ENCODE measurements at regions of chr2 and their contacts with region 1.

Region 1: DNA sequence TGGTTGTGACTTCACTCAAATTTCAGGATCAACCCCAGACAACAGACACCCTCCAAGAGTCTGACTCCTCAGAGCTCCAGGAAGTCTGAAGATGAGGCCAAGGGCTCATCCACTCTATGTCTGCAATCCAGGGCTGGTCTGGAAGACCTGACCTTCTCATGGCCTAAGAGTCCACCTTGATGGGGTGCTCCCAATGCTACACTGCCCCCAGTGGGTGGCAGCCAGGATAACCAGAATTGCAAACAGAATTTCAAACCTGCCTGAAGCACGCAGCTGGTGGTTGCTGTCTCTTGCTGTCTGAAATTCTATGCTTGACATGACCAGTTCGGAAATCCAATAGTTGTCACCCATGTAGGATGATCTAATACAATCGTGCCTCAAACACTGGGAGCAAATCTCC is 96.0 kb downstream of the UXS1 start:
- DNase-seq: no peak
- ATAC-seq: no peak
- H3K4me3 ChIP-seq: no peak overlapping the region
- H3K4me3 Mint-ChIP-seq: peak overlapping the region in 4 of 10 donors; percentile 1 to 36 (median 6)
- H3K27ac ChIP-seq: peak overlapping the region; percentile 80
- H3K27ac Mint-ChIP-seq: peak overlapping the region; percentile 25 to 97 (median 94)
- H3K4me1 ChIP-seq: peaks cover 41 to 47% of the 10 kb centered on the region in 2 donors
- H3K4me1 Mint-ChIP-seq: peaks cover 27 to 67% (median 55%) of the 10 kb centered on the region in 7 donors
- H3K27me3 ChIP-seq: no peaks in the 10 kb centered on the region
- H3K27me3 Mint-ChIP-seq: no peaks in the 10 kb centered on the region

Region 2: DNA sequence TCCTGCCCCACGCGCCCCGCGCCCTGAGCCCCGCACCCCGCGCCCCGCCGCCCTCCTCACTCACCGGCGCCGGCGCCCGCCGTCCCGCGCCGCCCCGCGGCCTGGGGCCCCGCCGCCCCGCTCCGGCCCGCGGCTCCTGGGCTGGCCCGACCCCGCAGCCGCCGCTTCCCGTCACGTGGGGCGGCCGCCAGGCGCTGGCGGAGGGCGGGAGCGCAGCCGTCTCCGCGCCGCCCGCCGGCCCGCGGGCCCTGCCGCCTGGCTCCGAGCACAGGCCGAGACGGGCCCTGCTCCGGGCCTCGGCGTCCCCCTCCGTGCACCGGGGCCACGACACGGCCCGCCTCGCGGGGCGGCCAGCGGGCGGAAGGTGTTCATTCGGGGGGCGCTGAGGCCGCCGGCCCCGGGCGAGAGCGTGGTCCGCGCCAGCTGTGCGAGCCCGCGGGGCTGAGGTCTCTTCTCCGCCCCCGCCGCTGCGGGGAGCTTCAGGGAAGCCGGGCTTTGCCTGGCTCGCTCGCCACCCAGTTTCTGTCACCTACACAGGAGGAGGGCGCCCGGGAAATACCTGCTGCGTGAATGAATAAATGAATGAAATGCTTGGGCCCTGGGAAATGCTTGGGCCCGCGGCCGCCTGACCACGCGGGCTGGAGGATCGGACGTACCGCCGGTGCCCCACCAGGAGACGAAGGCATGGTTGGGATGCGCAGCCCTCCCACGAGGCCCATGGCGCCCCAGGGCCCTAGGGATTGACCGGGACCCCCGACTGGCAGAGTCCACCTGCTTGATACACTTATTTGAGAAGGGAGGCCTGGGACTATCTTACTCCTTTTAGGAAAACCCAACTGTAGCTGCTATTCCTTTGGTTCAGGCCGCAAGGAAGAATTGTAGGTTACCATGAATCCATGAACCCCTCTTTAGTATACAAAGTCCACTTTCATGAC is 768.3 kb before region 1 on chr2 and contains the start of gene TGFBRAP1:
- CTCF ChIA-PET with region 1: no interaction called
- POLR2A ChIA-PET with region 1: no interaction called
- intact Hi-C with region 1: loop called in 1 of 2 experiments (anchors 5 kb)
- DNase-seq: peak; percentile 40 to 78 (median 63)
- ATAC-seq: peak; percentile 93
- H3K4me3 ChIP-seq: peak within 1 kb of the TSS; percentile 78
- H3K4me3 Mint-ChIP-seq: peak within 1 kb of the TSS; percentile 88 to 98 (median 92)
- H3K27ac ChIP-seq: peak within 1 kb of the TSS; percentile 98
- H3K27ac Mint-ChIP-seq: peak within 1 kb of the TSS; percentile 89 to 96 (median 93)
- H3K4me1 ChIP-seq: peaks cover 12 to 22% of the 10 kb centered on the region in 2 donors
- H3K4me1 Mint-ChIP-seq: peaks cover 23 to 53% (median 41%) of the 10 kb centered on the region in 7 donors
- H3K27me3 ChIP-seq: no peaks in the 10 kb centered on the region
- H3K27me3 Mint-ChIP-seq: no peaks in the 10 kb centered on the region
- total RNA-seq, gene TGFBRAP1: 19.1 to 22.5 (median 21.6) TPM

Region 3: DNA sequence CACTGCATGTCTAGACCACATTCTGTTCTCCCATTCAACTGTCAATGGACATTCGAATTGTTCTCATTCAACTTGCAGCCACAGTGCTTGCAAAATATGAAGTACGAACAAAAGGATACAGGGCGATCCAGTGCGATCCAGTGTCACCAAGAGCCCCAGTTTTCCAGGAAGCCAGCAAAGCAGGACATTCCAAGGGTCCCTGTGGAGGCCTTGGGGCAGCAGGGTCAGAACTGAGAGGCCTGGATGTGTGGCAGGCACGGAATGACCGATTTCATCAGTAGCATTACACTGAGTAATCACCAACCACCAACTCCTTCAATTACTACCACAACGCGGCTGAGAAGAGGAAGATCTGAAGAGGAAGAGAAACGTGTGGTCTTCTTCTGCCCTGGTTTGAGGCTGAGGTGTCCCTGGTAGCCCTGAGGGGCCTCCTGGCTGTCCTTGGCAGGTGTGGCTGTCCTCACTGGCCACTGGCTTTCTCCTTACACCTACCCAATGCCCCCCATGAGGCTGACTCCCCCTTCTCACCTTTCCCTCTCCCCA is 526.6 kb before region 1 on chr2:
- CTCF ChIA-PET with region 1: interaction called, 20 read pairs
- POLR2A ChIA-PET with region 1: interaction called, 5 read pairs
- intact Hi-C with region 1: loop called (anchors 1 to 2 kb)
- DNase-seq: no peak
- ATAC-seq: no peak
- H3K4me3 ChIP-seq: no peak overlapping the region
- H3K4me3 Mint-ChIP-seq: peak overlapping the region in 1 of 10 donors; percentile 4
- H3K27ac ChIP-seq: no peak overlapping the region
- H3K27ac Mint-ChIP-seq: peak overlapping the region in 2 of 9 donors; percentile 32 to 57
- H3K4me1 ChIP-seq: peaks cover under 1 to 16% of the 10 kb centered on the region in 2 donors
- H3K4me1 Mint-ChIP-seq: peaks cover 10 to 39% (median 13%) of the 10 kb centered on the region in 7 donors
- H3K27me3 ChIP-seq: no peaks in the 10 kb centered on the region
- H3K27me3 Mint-ChIP-seq: peaks cover 0 to 26% (median 0%) of the 10 kb centered on the region in 5 donors

Region 4: GRCh38 chr2:105744091-105744908 is 353.8 kb before region 1 on chr2:
- CTCF ChIA-PET with region 1: interaction called, 4 read pairs
- POLR2A ChIA-PET with region 1: interaction called, 26 read pairs
- intact Hi-C with region 1: loop called (anchors 1 to 2 kb)
- DNase-seq: peak; percentile 57 to 79 (median 69)
- ATAC-seq: peak; percentile 87
- H3K4me3 ChIP-seq: peak overlapping the region; percentile 24
- H3K4me3 Mint-ChIP-seq: peak overlapping the region; percentile 76 to 96 (median 90)
- H3K27ac ChIP-seq: peak overlapping the region; percentile 80
- H3K27ac Mint-ChIP-seq: peak overlapping the region; percentile 90 to 96 (median 95)
- H3K4me1 ChIP-seq: peaks cover 48 to 54% of the 10 kb centered on the region in 2 donors
- H3K4me1 Mint-ChIP-seq: peaks cover 49 to 82% (median 77%) of the 10 kb centered on the region in 7 donors
- H3K27me3 ChIP-seq: no peaks in the 10 kb centered on the region
- H3K27me3 Mint-ChIP-seq: no peaks in the 10 kb centered on the region

Region 5: GRCh38 chr2:105858868-105859693 is 239.0 kb before region 1 on chr2:
- CTCF ChIA-PET with region 1: no interaction called
- POLR2A ChIA-PET with region 1: interaction called, 4 read pairs
- intact Hi-C with region 1: loop called in 1 of 2 experiments (anchors 2 kb)
- DNase-seq: peak in 1 of 9 donors; percentile 45
- ATAC-seq: no peak
- H3K4me3 ChIP-seq: no peak overlapping the region
- H3K4me3 Mint-ChIP-seq: peak overlapping the region; percentile 49 to 91 (median 80)
- H3K27ac ChIP-seq: peak overlapping the region; percentile 66
- H3K27ac Mint-ChIP-seq: peak overlapping the region; percentile 80 to 98 (median 92)
- H3K4me1 ChIP-seq: peaks cover 71 to 91% of the 10 kb centered on the region in 2 donors
- H3K4me1 Mint-ChIP-seq: peaks cover 54 to 97% (median 94%) of the 10 kb centered on the region in 7 donors
- H3K27me3 ChIP-seq: no peaks in the 10 kb centered on the region
- H3K27me3 Mint-ChIP-seq: no peaks in the 10 kb centered on the region

Region 6: GRCh38 chr2:105977212-105977611 is 120.9 kb before region 1 on chr2:
- CTCF ChIA-PET with region 1: interaction called, 3 read pairs
- POLR2A ChIA-PET with region 1: no interaction called
- intact Hi-C with region 1: loop called in 1 of 2 experiments (anchors 5 kb)
- DNase-seq: no peak
- ATAC-seq: no peak
- H3K4me3 ChIP-seq: no peak overlapping the region
- H3K4me3 Mint-ChIP-seq: peak overlapping the region in 6 of 10 donors; percentile 4 to 52 (median 16)
- H3K27ac ChIP-seq: no peak overlapping the region
- H3K27ac Mint-ChIP-seq: peak overlapping the region in 8 of 9 donors; percentile 66 to 89 (median 83)
- H3K4me1 ChIP-seq: peaks cover 0 to 41% of the 10 kb centered on the region in 2 donors
- H3K4me1 Mint-ChIP-seq: peaks cover 7 to 75% (median 59%) of the 10 kb centered on the region in 7 donors
- H3K27me3 ChIP-seq: no peaks in the 10 kb centered on the region
- H3K27me3 Mint-ChIP-seq: peaks cover 0 to 2% (median 0%) of the 10 kb centered on the region in 5 donors

Region 7: GRCh38 chr2:106085181-106085940 is 12.7 kb before region 1 on chr2:
- CTCF ChIA-PET with region 1: interaction called, 20 read pairs
- POLR2A ChIA-PET with region 1: interaction called, 23 read pairs
- intact Hi-C with region 1: loop called (anchors 1 kb)
- DNase-seq: peak in 7 of 9 donors; percentile 57 to 76 (median 70)
- ATAC-seq: peak; percentile 90
- H3K4me3 ChIP-seq: peak overlapping the region; percentile 6
- H3K4me3 Mint-ChIP-seq: peak overlapping the region; percentile 47 to 83 (median 69)
- H3K27ac ChIP-seq: peak overlapping the region; percentile 64
- H3K27ac Mint-ChIP-seq: peak overlapping the region; percentile 79 to 97 (median 93)
- H3K4me1 ChIP-seq: peaks cover 37 to 59% of the 10 kb centered on the region in 2 donors
- H3K4me1 Mint-ChIP-seq: peaks cover 27 to 97% (median 76%) of the 10 kb centered on the region in 7 donors
- H3K27me3 ChIP-seq: no peaks in the 10 kb centered on the region
- H3K27me3 Mint-ChIP-seq: peaks cover 0 to 6% (median 0%) of the 10 kb centered on the region in 5 donors

Region 8: DNA sequence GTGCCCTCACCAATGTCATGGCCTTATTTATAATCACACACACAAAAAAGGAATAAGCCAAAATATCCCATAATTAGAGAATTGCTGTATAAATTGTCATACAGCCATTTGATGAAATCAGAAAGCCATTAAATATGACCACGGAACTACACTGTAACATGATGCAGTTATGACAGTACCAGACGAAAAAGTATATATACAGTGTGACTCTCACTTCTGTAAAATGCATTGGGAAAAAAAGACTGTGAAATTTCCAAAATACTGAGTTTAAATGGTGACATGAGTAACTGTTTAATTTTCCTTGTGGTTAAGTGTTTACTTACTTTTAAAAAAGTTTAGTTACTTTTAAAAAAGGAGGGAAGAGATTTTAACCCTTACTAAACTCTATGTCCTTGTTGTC is 70.6 kb after region 1 on chr2:
- CTCF ChIA-PET with region 1: no interaction called
- POLR2A ChIA-PET with region 1: no interaction called
- intact Hi-C with region 1: no loop called
- DNase-seq: no peak
- ATAC-seq: no peak
- H3K4me3 ChIP-seq: no peak overlapping the region
- H3K4me3 Mint-ChIP-seq: peak overlapping the region in 1 of 10 donors; percentile 39
- H3K27ac ChIP-seq: peak overlapping the region; percentile 23
- H3K27ac Mint-ChIP-seq: peak overlapping the region in 8 of 9 donors; percentile 60 to 98 (median 86)
- H3K4me1 ChIP-seq: peaks cover 4 to 43% of the 10 kb centered on the region in 2 donors
- H3K4me1 Mint-ChIP-seq: peaks cover 35 to 97% (median 86%) of the 10 kb centered on the region in 7 donors
- H3K27me3 ChIP-seq: no peaks in the 10 kb centered on the region
- H3K27me3 Mint-ChIP-seq: no peaks in the 10 kb centered on the region

Measured in naive thymus-derived CD4-positive, alpha-beta T cell (primary cell).